Endothelial cell of umbilical vein (primary cell): ENCODE measurements at regions of chr18 and their contacts with region 1.

Region 1: DNA sequence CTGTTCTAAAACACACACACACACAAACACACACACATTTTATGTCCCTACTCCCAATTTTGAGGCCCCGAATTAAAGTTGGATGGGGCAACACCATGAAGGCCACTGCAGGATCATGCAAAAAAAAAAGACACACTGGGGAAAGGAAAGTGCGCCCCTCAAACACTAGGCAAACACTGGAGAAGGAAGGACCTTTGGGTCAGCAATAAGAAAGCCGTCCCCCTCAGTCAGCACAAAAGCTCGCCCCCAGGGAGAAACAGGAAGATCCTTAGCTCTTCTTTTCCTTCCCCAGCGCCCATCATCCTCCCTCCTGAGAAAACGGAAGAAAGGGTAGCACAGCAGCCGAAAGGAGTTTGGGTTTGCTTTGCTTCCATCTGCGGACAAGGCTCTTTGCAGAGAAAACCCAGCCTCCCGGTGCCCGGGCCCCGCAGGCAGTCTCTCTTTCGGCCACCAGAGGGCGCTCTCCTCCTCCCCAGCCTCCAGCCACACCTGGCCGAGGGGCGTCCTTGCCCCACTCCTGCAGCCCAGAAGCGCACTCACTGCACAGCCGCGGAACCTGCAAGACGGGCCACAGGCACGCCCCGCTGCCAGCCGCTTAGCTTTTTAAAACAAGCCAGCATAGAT is 248.5 kb downstream of the CDH20 start:
- DNase-seq: peak; percentile 77
- H3K4me3 ChIP-seq: peak overlapping the region; percentile 40 to 56 (median 54)
- H3K27ac ChIP-seq: peak overlapping the region; percentile 25
- H3K4me1 ChIP-seq: peaks cover 18% of the 10 kb centered on the region
- H3K27me3 ChIP-seq: no peaks in the 10 kb centered on the region
- CTCF ChIP-seq: peak; percentile 97
- POLR2A ChIP-seq: no peak

Region 2: DNA sequence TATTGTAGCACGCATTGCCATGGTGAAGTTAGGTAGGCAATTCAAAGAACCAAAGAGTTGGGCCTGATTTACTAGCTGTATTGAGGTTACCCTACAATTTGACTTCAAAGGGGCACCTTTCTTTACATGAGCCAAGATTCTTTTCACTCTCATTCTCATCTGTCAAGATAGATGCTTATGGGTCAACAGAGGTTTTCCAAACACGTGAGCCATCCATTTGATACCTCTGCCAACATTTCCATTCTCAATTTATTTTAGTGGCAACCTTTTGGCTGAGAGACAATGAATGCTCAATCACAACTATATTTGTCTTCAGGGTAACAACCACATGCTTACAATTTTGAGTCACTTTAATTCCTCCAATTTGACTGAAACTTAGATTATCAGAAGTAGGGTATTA is 619.1 kb before region 1 on chr18:
- CTCF ChIA-PET with region 1: no interaction called
- POLR2A ChIA-PET with region 1: no interaction called
- dilution Hi-C with region 1: no loop called
- intact Hi-C with region 1: no loop called
- DNase-seq: no peak
- H3K4me3 ChIP-seq: no peak overlapping the region
- H3K27ac ChIP-seq: no peak overlapping the region
- H3K4me1 ChIP-seq: peaks cover 16% of the 10 kb centered on the region
- H3K27me3 ChIP-seq: no peaks in the 10 kb centered on the region
- CTCF ChIP-seq: no peak
- POLR2A ChIP-seq: no peak

Region 3: GRCh38 chr18:61371111-61371510 is 210.6 kb before region 1 on chr18:
- CTCF ChIA-PET with region 1: no interaction called
- POLR2A ChIA-PET with region 1: no interaction called
- dilution Hi-C with region 1: no loop called
- intact Hi-C with region 1: no loop called
- DNase-seq: no peak
- H3K4me3 ChIP-seq: no peak overlapping the region
- H3K27ac ChIP-seq: no peak overlapping the region
- H3K4me1 ChIP-seq: no peaks in the 10 kb centered on the region
- H3K27me3 ChIP-seq: peaks cover 3 to 7% of the 10 kb centered on the region in 2 experiments
- CTCF ChIP-seq: no peak
- POLR2A ChIP-seq: no peak

Region 4: GRCh38 chr18:61551586-61551985 is 30.1 kb before region 1 on chr18:
- CTCF ChIA-PET with region 1: interaction called, 11 read pairs
- POLR2A ChIA-PET with region 1: no interaction called
- dilution Hi-C with region 1: no loop called
- intact Hi-C with region 1: loop called (anchors 1 kb)
- DNase-seq: peak; percentile 88
- H3K4me3 ChIP-seq: no peak overlapping the region
- H3K27ac ChIP-seq: no peak overlapping the region
- H3K4me1 ChIP-seq: no peaks in the 10 kb centered on the region
- H3K27me3 ChIP-seq: no peaks in the 10 kb centered on the region
- CTCF ChIP-seq: peak; percentile 72 to 79
- POLR2A ChIP-seq: no peak

Region 5: GRCh38 chr18:61596296-61596695 is 14.6 kb after region 1 on chr18:
- CTCF ChIA-PET with region 1: interaction called, 18 read pairs
- POLR2A ChIA-PET with region 1: no interaction called
- dilution Hi-C with region 1: no loop called
- intact Hi-C with region 1: no loop called
- DNase-seq: no peak
- H3K4me3 ChIP-seq: peak overlapping the region in 1 of 3 experiments; percentile 13
- H3K27ac ChIP-seq: no peak overlapping the region
- H3K4me1 ChIP-seq: peaks cover 17% of the 10 kb centered on the region
- H3K27me3 ChIP-seq: no peaks in the 10 kb centered on the region
- CTCF ChIP-seq: no peak
- POLR2A ChIP-seq: no peak

Region 6: DNA sequence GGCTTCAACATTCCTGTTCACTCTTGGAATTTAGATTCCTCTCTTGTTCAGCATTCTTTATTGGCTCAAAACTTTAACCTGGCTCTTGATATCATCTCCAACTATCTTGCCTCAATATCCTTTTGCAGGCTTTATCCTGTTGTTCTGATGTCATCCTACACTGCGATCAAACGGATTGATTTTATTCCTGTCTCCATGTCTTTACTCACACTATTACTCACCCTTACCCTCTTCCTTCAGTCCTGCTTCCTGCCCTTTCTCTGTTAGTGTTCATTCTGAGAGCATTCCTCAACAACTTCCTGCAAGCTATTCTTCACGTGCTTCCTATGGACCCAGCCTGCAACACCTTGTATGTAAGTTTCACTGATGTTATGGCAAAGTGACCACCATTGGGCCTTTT is 46.4 kb after region 1 on chr18:
- CTCF ChIA-PET with region 1: interaction called, 22 read pairs
- POLR2A ChIA-PET with region 1: no interaction called
- dilution Hi-C with region 1: no loop called
- intact Hi-C with region 1: no loop called
- DNase-seq: peak; percentile 75
- H3K4me3 ChIP-seq: peak overlapping the region in 1 of 3 experiments; percentile 22
- H3K27ac ChIP-seq: peak overlapping the region; percentile 63
- H3K4me1 ChIP-seq: peaks cover 18% of the 10 kb centered on the region
- H3K27me3 ChIP-seq: no peaks in the 10 kb centered on the region
- CTCF ChIP-seq: no peak
- POLR2A ChIP-seq: no peak

Region 7: GRCh38 chr18:61719671-61720070 is 138.0 kb after region 1 on chr18:
- CTCF ChIA-PET with region 1: no interaction called
- POLR2A ChIA-PET with region 1: no interaction called
- dilution Hi-C with region 1: no loop called
- intact Hi-C with region 1: no loop called
- DNase-seq: peak; percentile 88
- H3K4me3 ChIP-seq: no peak overlapping the region
- H3K27ac ChIP-seq: peak overlapping the region; percentile 33
- H3K4me1 ChIP-seq: peaks cover 19% of the 10 kb centered on the region
- H3K27me3 ChIP-seq: no peaks in the 10 kb centered on the region
- CTCF ChIP-seq: no peak
- POLR2A ChIP-seq: peak; percentile 42

Region 8: DNA sequence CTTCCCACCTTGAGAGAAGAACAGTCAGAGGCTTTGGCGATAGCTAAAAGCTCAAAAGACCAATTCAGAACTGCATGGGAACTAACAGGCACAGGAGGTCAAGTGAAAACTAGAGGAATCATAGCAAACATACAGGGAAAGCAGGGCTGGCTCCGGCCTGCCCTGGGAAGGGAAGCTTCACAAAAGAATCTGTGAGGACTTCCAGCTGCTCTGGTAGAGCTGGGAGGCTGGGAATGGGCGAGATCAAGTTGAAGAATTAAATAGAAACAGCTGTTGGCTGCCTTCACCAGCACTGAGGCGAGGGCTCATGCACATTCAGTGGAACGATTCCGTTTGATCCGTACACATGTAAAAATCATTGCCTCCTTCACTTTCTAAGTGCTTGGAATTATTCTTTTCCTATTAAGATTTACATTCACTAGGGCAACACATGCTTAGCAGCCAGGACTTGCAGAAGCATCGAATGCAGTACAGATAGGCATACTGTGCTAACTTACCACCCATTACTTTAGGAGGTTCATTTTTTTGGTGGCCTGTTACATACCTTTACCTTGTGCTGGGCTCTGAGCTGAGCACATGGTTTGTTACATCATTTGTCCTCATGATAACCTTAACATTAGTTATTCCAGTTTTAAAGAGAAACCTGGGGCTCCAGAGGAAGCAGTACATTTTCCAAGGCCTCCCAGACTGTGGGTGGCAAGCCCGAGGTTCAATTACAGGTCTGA is 436.5 kb after region 1 on chr18:
- CTCF ChIA-PET with region 1: no interaction called
- POLR2A ChIA-PET with region 1: no interaction called
- dilution Hi-C with region 1: no loop called
- intact Hi-C with region 1: no loop called
- DNase-seq: no peak
- H3K4me3 ChIP-seq: no peak overlapping the region
- H3K27ac ChIP-seq: no peak overlapping the region
- H3K4me1 ChIP-seq: no peaks in the 10 kb centered on the region
- H3K27me3 ChIP-seq: no peaks in the 10 kb centered on the region
- CTCF ChIP-seq: no peak
- POLR2A ChIP-seq: no peak